ENCODE measurements at regions of chrX and their contacts with region 1.

Region 1: GRCh38 chrX:15564981-15565579 is 35.7 kb downstream of the ACE2 start:
- DNase-seq: peak; percentile 46
- H3K4me3 Mint-ChIP-seq: no peak overlapping the region
- H3K27ac Mint-ChIP-seq: no peak overlapping the region
- H3K4me1 Mint-ChIP-seq: no peaks in the 10 kb centered on the region
- H3K27me3 Mint-ChIP-seq: peaks cover 4% of the 10 kb centered on the region

Region 2: DNA sequence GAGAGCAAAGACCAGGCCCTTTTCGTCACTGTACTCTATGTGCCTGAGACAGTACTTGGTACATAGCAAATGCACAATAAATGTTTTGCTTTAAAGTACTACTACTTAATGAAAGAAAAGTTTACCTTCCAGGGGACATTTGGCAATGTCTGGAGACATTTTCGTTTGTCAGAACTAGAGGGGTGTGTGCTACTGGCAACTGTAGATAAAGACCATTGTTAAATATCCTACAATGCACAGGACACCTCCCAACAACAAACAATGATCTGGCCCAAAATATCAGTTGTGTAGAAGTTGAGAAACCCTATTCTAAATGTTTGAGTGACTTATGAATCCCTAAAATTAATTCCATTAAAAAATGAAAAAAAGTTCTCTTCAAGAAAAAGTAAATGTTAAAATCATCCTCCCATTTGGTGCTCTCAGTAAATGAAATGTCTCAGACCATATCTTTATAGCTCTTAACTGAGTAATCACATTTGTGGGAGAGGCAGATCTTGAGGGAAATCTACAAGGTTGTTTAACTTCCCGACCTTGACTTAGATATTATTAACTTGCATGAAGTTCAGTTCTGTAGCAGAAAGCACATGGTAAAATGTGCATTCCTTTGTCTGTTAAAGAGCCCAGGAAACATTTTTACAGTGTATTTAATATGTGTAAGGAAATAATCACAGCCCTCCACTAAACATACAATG is 1977.1 kb before region 1 on chrX:
- CTCF ChIA-PET with region 1: no interaction called
- intact Hi-C with region 1: no loop called
- DNase-seq: no peak
- H3K4me3 Mint-ChIP-seq: no peak overlapping the region
- H3K27ac Mint-ChIP-seq: no peak overlapping the region
- H3K4me1 Mint-ChIP-seq: no peaks in the 10 kb centered on the region
- H3K27me3 Mint-ChIP-seq: peaks cover 4% of the 10 kb centered on the region

Region 3: DNA sequence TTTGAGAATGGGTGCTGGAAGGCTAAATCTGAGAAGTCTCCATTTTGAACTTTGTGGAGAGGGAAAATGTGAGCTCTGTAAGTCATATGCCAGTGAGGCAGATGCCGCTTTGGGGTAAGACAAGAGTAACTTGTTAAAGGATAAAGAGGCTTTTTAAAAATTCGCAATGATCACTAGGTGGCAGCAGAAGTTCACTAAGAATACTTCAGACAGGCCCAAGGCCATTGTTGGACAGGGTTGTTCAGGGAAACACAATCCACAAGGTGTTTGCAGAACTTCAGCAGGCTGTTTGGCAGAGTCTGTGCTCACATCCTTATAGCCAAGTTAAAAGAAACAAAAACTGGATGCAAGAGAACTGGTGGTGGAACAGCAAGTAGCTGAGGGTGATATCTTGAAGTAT is 216.0 kb before region 1 on chrX:
- CTCF ChIA-PET with region 1: interaction called, 4 read pairs
- intact Hi-C with region 1: loop called (anchors 1 kb)
- DNase-seq: peak; percentile 17
- H3K4me3 Mint-ChIP-seq: no peak overlapping the region
- H3K27ac Mint-ChIP-seq: no peak overlapping the region
- H3K4me1 Mint-ChIP-seq: no peaks in the 10 kb centered on the region
- H3K27me3 Mint-ChIP-seq: peaks cover 2% of the 10 kb centered on the region

Region 4: DNA sequence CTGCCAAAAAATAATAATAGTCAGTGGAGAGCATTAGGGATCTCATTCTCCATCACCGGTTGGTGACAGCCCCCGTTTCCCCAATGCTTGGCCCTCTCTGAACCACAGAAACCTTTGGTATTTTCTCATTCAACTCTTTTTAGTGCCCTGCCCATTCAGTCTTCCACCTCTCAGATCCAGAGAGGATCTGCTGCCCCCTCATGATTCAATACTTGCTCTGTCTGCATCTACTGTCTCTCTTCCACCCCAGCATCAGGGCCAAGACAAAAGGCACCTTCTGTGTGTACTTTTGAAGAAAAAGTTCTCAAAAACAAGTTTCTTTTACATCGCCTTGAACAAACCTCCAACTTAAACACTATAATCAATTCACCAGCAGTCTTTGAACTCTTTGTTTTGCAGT is 80.2 kb after region 1 on chrX:
- CTCF ChIA-PET with region 1: no interaction called
- intact Hi-C with region 1: loop called (anchors 2 kb)
- DNase-seq: no peak
- H3K4me3 Mint-ChIP-seq: no peak overlapping the region
- H3K27ac Mint-ChIP-seq: peak overlapping the region; percentile 43
- H3K4me1 Mint-ChIP-seq: peaks cover 21% of the 10 kb centered on the region
- H3K27me3 Mint-ChIP-seq: no peaks in the 10 kb centered on the region

Measured in activated naive CD4-positive, alpha-beta T cell treated with anti-CD3 and anti-CD28 coated beads for 36 hours (primary cell).